ENCODE measurements at regions of chr10 and their contacts with region 1.

Region 1: GRCh38 chr10:74826142-74827044 is at the start of gene KAT6B:
- DNase-seq: peak; percentile 100
- H3K4me3 ChIP-seq: peak within 1 kb of the TSS; percentile 93
- H3K27ac ChIP-seq: peak within 1 kb of the TSS; percentile 97
- H3K4me1 ChIP-seq: peaks cover 17% of the 10 kb centered on the region
- H3K27me3 ChIP-seq: peaks cover 4% of the 10 kb centered on the region
- CTCF ChIP-seq: peak; percentile 46; the same call in 1 of the 2 replicates
- total RNA-seq, gene KAT6B: 21.8 and 22.2 TPM in 2 replicates

Region 2: DNA sequence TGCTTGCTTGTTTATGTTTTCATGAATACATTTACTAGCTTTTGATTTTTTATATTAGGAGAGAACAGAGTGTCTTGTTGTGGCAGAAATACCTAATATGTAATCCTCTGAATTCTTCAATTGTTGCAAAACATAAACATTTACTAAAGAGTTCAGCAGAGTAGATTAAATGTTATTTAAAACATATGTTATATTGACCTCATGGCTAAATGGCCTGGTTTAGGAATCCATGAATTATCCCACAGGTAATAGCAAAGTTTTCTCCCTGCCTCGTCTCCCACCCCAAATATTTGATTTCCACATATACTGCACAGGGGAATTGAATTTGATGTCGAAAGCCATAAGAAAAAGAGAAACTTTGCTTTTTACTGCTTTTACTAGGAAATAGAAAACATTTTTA is 563.5 kb before region 1 on chr10:
- CTCF ChIA-PET with region 1: no interaction called
- POLR2A ChIA-PET with region 1: no interaction called
- intact Hi-C with region 1: loop called (anchors 5 kb)
- DNase-seq: no peak
- H3K4me3 ChIP-seq: no peak overlapping the region
- H3K27ac ChIP-seq: no peak overlapping the region
- H3K4me1 ChIP-seq: peaks cover 6% of the 10 kb centered on the region
- H3K27me3 ChIP-seq: no peaks in the 10 kb centered on the region
- CTCF ChIP-seq: no peak

Region 3: GRCh38 chr10:74419958-74420375 is 406.4 kb before region 1 on chr10:
- CTCF ChIA-PET with region 1: no interaction called
- POLR2A ChIA-PET with region 1: no interaction called
- intact Hi-C with region 1: loop called (anchors 2 kb)
- DNase-seq: peak; percentile 87
- H3K4me3 ChIP-seq: no peak overlapping the region
- H3K27ac ChIP-seq: peak overlapping the region; percentile 83
- H3K4me1 ChIP-seq: peaks cover 41% of the 10 kb centered on the region
- H3K27me3 ChIP-seq: no peaks in the 10 kb centered on the region
- CTCF ChIP-seq: peak; percentile 81

Region 4: GRCh38 chr10:74967911-74968645 is 141.7 kb after region 1 on chr10:
- CTCF ChIA-PET with region 1: no interaction called
- POLR2A ChIA-PET with region 1: no interaction called
- intact Hi-C with region 1: loop called (anchors 2 kb)
- DNase-seq: peak; percentile 89
- H3K4me3 ChIP-seq: peak overlapping the region; percentile 25
- H3K27ac ChIP-seq: peak overlapping the region; percentile 66
- H3K4me1 ChIP-seq: peaks cover 60% of the 10 kb centered on the region
- H3K27me3 ChIP-seq: no peaks in the 10 kb centered on the region
- CTCF ChIP-seq: no peak